Naive thymus-derived CD4-positive, alpha-beta T cell (primary cell): ENCODE measurements at regions of chr11 and their contacts with region 1.

Region 1: DNA sequence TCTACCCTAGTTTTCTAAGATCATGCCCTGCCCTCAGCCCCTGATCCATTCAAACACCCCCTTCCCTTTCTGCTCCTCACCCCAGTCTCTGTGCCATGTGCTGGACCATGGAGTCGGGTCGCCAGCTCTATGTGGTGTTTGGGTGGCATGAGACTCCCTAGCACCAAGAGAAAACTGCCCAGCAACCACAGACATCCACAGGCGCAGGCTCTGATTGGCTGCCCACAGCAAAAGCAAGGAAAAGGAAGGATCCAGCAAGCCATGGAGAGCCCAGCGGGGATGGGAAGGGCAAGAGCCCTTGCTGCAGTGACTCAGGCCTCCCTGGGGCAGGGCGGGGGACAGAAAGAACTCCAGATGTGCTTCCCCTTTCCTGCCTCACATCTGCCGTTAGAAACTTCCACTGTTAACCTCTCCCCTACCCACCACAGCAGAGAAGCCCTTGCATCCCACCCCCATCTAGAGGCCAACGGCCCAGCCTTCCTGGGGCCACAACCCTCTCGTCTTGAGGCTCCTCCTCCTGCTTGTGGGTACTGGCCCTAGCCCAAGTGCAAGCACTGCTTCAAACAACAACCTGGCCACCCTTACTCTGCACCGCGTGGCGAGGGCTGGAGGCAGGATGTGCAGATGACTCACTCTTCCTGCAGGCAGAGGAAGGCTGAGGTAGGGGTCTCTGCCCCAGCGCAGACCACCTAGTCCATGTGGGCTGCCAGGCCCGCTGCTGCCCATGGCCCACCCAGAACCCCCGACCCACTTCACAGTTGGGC is 9.7 kb upstream of the AHNAK start:
- DNase-seq: peak; percentile 58 to 82 (median 72)
- ATAC-seq: peak; percentile 48
- H3K4me3 ChIP-seq: peak overlapping the region; percentile 42
- H3K4me3 Mint-ChIP-seq: peak overlapping the region; percentile 65 to 87 (median 78)
- H3K27ac ChIP-seq: peak overlapping the region; percentile 87
- H3K27ac Mint-ChIP-seq: peak overlapping the region; percentile 87 to 100 (median 98)
- H3K4me1 ChIP-seq: peaks cover 69 to 84% of the 10 kb centered on the region in 2 donors
- H3K4me1 Mint-ChIP-seq: peaks cover 62 to 88% (median 81%) of the 10 kb centered on the region in 7 donors
- H3K27me3 ChIP-seq: no peaks in the 10 kb centered on the region
- H3K27me3 Mint-ChIP-seq: peaks cover 0 to 2% (median 0%) of the 10 kb centered on the region in 5 donors

Region 2: DNA sequence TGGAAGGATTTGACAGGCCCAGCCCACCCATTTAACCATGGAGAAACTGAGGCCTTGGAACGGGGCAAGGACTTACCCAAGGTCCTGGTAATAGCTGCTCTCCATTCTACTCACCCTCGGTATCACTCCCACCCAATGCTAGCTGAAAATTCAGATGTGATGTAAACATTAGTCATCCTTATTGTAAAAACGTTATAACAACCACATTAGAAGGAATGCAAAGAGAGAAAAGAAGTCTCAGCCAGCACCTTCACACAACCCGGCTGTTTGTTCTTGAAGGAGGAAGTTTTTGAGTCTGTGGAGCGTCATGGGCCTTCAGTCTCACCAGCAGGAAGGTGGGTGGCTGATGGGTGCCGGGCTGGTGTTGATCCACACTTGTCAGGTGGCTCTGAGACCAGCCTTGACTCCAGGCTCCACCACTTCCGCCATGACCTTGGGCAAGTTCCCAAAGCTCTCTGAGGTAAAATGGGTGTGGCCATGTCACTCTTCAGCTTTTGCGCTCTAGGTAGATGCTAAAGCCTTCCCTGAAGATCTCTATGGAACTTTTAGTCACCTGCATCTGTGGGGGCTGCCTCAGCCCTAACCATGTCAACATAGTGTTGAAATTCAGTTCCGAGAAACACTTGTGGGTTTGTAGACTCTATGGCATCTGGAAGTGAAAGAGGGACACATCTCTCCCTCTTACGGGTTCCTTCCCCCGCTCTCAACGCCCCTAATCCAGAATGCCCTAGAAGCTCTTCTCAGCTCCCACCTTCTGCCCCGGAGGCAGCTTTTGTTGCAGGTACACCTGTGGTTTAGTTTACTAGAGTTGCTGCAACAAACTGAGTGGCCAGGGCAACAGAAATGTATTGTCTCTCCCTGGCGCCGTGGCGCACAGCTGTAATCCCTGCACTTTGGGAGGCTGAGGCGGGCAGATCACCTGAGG is 1570.0 kb before region 1 on chr11:
- CTCF ChIA-PET with region 1: no interaction called
- POLR2A ChIA-PET with region 1: no interaction called
- intact Hi-C with region 1: loop called in 1 of 2 experiments (anchors 10 kb)
- DNase-seq: peak; percentile 59 to 99 (median 97)
- ATAC-seq: peak; percentile 93
- H3K4me3 ChIP-seq: peak overlapping the region; percentile 42
- H3K4me3 Mint-ChIP-seq: peak overlapping the region; percentile 75 to 96 (median 88)
- H3K27ac ChIP-seq: peak overlapping the region; percentile 96
- H3K27ac Mint-ChIP-seq: peak overlapping the region; percentile 91 to 100 (median 99)
- H3K4me1 ChIP-seq: peaks cover 62 to 88% of the 10 kb centered on the region in 2 donors
- H3K4me1 Mint-ChIP-seq: peaks cover 49 to 99% (median 94%) of the 10 kb centered on the region in 7 donors
- H3K27me3 ChIP-seq: no peaks in the 10 kb centered on the region
- H3K27me3 Mint-ChIP-seq: no peaks in the 10 kb centered on the region

Region 3: GRCh38 chr11:61834278-61835048 is 721.8 kb before region 1 on chr11:
- CTCF ChIA-PET with region 1: no interaction called
- POLR2A ChIA-PET with region 1: no interaction called
- intact Hi-C with region 1: no loop called
- DNase-seq: peak in 8 of 9 donors; percentile 17 to 71 (median 37)
- ATAC-seq: peak; percentile 92
- H3K4me3 ChIP-seq: no peak overlapping the region
- H3K4me3 Mint-ChIP-seq: peak overlapping the region in 8 of 10 donors; percentile 4 to 84 (median 48)
- H3K27ac ChIP-seq: peak overlapping the region; percentile 39
- H3K27ac Mint-ChIP-seq: peak overlapping the region in 8 of 9 donors; percentile 32 to 98 (median 78)
- H3K4me1 ChIP-seq: peaks cover 11 to 14% of the 10 kb centered on the region in 2 donors
- H3K4me1 Mint-ChIP-seq: peaks cover 22 to 69% (median 38%) of the 10 kb centered on the region in 7 donors
- H3K27me3 ChIP-seq: no peaks in the 10 kb centered on the region
- H3K27me3 Mint-ChIP-seq: peaks cover 0 to 41% (median 24%) of the 10 kb centered on the region in 5 donors

Region 4: GRCh38 chr11:62025487-62026105 is 530.7 kb before region 1 on chr11:
- CTCF ChIA-PET with region 1: no interaction called
- POLR2A ChIA-PET with region 1: no interaction called
- intact Hi-C with region 1: loop called (anchors 5 kb)
- DNase-seq: peak; percentile 45 to 97 (median 93)
- ATAC-seq: peak; percentile 91
- H3K4me3 ChIP-seq: peak overlapping the region; percentile 11
- H3K4me3 Mint-ChIP-seq: peak overlapping the region; percentile 68 to 84 (median 76)
- H3K27ac ChIP-seq: peak overlapping the region; percentile 93
- H3K27ac Mint-ChIP-seq: peak overlapping the region; percentile 95 to 100 (median 99)
- H3K4me1 ChIP-seq: peaks cover 9 to 17% of the 10 kb centered on the region in 2 donors
- H3K4me1 Mint-ChIP-seq: peaks cover 6 to 28% (median 24%) of the 10 kb centered on the region in 7 donors
- H3K27me3 ChIP-seq: no peaks in the 10 kb centered on the region
- H3K27me3 Mint-ChIP-seq: no peaks in the 10 kb centered on the region

Region 5: DNA sequence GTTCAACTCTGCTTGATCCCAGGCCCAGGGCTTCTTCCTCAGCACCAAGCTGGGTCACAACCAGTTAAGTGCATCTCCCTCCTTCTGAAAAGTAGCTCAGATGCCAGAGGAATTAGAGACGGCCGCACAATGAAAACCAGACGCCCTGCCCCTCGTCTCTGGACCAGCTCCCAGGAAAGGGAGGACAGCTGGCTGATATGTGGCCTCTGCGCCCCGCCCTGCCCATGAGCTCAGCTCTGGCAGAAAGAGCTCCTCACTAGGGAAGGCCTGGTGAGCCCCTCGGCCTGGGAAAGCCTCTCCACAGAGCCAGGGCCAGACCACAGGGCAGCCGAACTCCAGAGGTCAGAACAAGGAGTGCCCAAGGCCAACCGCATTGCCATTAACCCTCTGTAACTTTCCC is 155.5 kb before region 1 on chr11:
- CTCF ChIA-PET with region 1: interaction called, 22 read pairs
- POLR2A ChIA-PET with region 1: interaction called, 20 read pairs
- intact Hi-C with region 1: loop called (anchors 1 kb)
- DNase-seq: no peak
- ATAC-seq: no peak
- H3K4me3 ChIP-seq: no peak overlapping the region
- H3K4me3 Mint-ChIP-seq: peak overlapping the region in 6 of 10 donors; percentile 78 to 90 (median 86)
- H3K27ac ChIP-seq: peak overlapping the region; percentile 35
- H3K27ac Mint-ChIP-seq: peak overlapping the region in 6 of 9 donors; percentile 21 to 89 (median 82)
- H3K4me1 ChIP-seq: peaks cover 18 to 44% of the 10 kb centered on the region in 2 donors
- H3K4me1 Mint-ChIP-seq: peaks cover 24 to 63% (median 47%) of the 10 kb centered on the region in 7 donors
- H3K27me3 ChIP-seq: no peaks in the 10 kb centered on the region
- H3K27me3 Mint-ChIP-seq: no peaks in the 10 kb centered on the region

Region 6: DNA sequence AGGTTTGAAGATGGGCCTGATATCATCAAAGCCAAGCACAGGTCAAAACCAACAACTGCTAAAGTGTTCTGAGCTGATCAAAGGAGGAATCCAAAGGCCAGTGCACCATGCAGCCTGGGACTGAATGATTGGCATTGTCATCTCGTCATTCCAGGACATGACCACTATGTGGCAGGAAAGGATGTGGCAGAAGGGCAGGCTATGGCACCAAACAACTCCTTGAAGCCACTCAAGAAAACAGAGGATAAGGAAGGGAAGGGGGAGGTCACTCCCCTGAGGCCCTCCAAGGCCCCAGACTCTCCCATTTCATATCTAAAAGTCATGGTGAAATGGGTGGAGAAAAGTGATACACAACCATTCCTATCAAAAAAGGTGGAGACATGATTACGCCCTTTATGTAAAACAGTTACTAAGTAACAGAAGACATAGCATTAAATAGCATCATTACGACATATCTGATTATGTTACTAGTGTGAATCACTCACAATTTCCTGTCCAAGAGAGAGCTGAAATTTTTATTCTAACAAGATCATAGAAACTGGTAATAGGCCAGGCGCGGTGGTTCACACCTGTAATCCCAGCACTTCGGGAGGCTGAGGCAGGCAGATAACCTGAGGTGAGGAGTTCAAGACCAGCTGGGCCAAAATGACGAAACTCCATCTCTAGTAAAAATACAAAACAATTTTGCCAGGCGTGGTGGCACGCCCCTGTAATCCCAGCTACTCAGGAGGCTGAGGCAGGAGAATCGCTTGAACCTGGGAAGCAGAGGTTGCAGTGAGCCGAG is 59.0 kb before region 1 on chr11:
- CTCF ChIA-PET with region 1: interaction called, 4 read pairs
- POLR2A ChIA-PET with region 1: no interaction called
- intact Hi-C with region 1: loop called (anchors 1 kb)
- DNase-seq: peak in 3 of 9 donors; percentile 5 to 20 (median 18)
- ATAC-seq: peak; percentile 74
- H3K4me3 ChIP-seq: no peak overlapping the region
- H3K4me3 Mint-ChIP-seq: no peak overlapping the region
- H3K27ac ChIP-seq: no peak overlapping the region
- H3K27ac Mint-ChIP-seq: no peak overlapping the region
- H3K4me1 ChIP-seq: no peaks in the 10 kb centered on the region
- H3K4me1 Mint-ChIP-seq: peaks cover 0 to 18% (median 0%) of the 10 kb centered on the region in 7 donors
- H3K27me3 ChIP-seq: no peaks in the 10 kb centered on the region
- H3K27me3 Mint-ChIP-seq: peaks cover 0 to 15% (median under 1%) of the 10 kb centered on the region in 5 donors

Region 7: GRCh38 chr11:62601394-62602140 is 45.3 kb after region 1 on chr11 and contains the start of gene MTA2:
- CTCF ChIA-PET with region 1: no interaction called
- POLR2A ChIA-PET with region 1: interaction called, 7 read pairs
- intact Hi-C with region 1: loop called in 1 of 2 experiments (anchors 1 kb)
- DNase-seq: peak; percentile 98 to 100 (median 100)
- ATAC-seq: peak; percentile 85
- H3K4me3 ChIP-seq: peak within 1 kb of the TSS; percentile 71
- H3K4me3 Mint-ChIP-seq: peak within 1 kb of the TSS; percentile 85 to 99 (median 94)
- H3K27ac ChIP-seq: peak within 1 kb of the TSS; percentile 98
- H3K27ac Mint-ChIP-seq: peak within 1 kb of the TSS; percentile 90 to 98 (median 97)
- H3K4me1 ChIP-seq: peaks cover 16 to 23% of the 10 kb centered on the region in 2 donors
- H3K4me1 Mint-ChIP-seq: peaks cover 43 to 64% (median 54%) of the 10 kb centered on the region in 7 donors
- H3K27me3 ChIP-seq: no peaks in the 10 kb centered on the region
- H3K27me3 Mint-ChIP-seq: no peaks in the 10 kb centered on the region
- total RNA-seq, gene MTA2: 134 to 238 (median 199) TPM

Region 8: GRCh38 chr11:62855571-62856332 is 299.5 kb after region 1 on chr11:
- CTCF ChIA-PET with region 1: no interaction called
- POLR2A ChIA-PET with region 1: interaction called, 13 read pairs
- intact Hi-C with region 1: loop called in 1 of 2 experiments (anchors 1 kb)
- DNase-seq: peak; percentile 96 to 100 (median 99)
- ATAC-seq: peak; percentile 97
- H3K4me3 ChIP-seq: peak overlapping the region; percentile 97
- H3K4me3 Mint-ChIP-seq: peak overlapping the region; percentile 93 to 100 (median 98)
- H3K27ac ChIP-seq: peak overlapping the region; percentile 85
- H3K27ac Mint-ChIP-seq: peak overlapping the region; percentile 86 to 98 (median 94)
- H3K4me1 ChIP-seq: peaks cover 33 to 39% of the 10 kb centered on the region in 2 donors
- H3K4me1 Mint-ChIP-seq: peaks cover 34 to 77% (median 46%) of the 10 kb centered on the region in 7 donors
- H3K27me3 ChIP-seq: no peaks in the 10 kb centered on the region
- H3K27me3 Mint-ChIP-seq: peaks cover 0 to 6% (median 0%) of the 10 kb centered on the region in 5 donors